H1 (cell line): ENCODE measurements at regions of chr1 and their contacts with region 1.

Region 1: GRCh38 chr1:16398371-16398953 is 31.4 kb downstream of the SZRD1 start:
- DNase-seq: no peak
- H3K4me3 ChIP-seq: no peak overlapping the region
- H3K27ac ChIP-seq: no peak overlapping the region
- H3K4me1 ChIP-seq: peaks cover 0 to 4% (median 0%) of the 10 kb centered on the region in 4 experiments; a peak in 1 of 7 replicates
- H3K27me3 ChIP-seq: no peaks in the 10 kb centered on the region
- CTCF ChIP-seq: no peak
- EP300 ChIP-seq: no peak
- POLR2A ChIP-seq: no peak
- RAD21 ChIP-seq: no peak

Region 2: GRCh38 chr1:16386454-16387113 is 11.9 kb before region 1 on chr1:
- CTCF ChIA-PET with region 1: interaction called, 5 read pairs
- POLR2A ChIA-PET with region 1: interaction called, 13 read pairs
- DNase-seq: no peak
- H3K4me3 ChIP-seq: no peak overlapping the region
- H3K27ac ChIP-seq: no peak overlapping the region
- H3K4me1 ChIP-seq: peaks cover 8 to 22% (median 13%) of the 10 kb centered on the region in 4 experiments
- H3K27me3 ChIP-seq: no peaks in the 10 kb centered on the region
- CTCF ChIP-seq: no peak
- EP300 ChIP-seq: no peak
- POLR2A ChIP-seq: no peak
- RAD21 ChIP-seq: no peak

Region 3: GRCh38 chr1:16451841-16452528 is 53.5 kb after region 1 on chr1:
- CTCF ChIA-PET with region 1: no interaction called
- POLR2A ChIA-PET with region 1: no interaction called
- DNase-seq: no peak
- H3K4me3 ChIP-seq: no peak overlapping the region
- H3K27ac ChIP-seq: no peak overlapping the region
- H3K4me1 ChIP-seq: no peaks in the 10 kb centered on the region
- H3K27me3 ChIP-seq: no peaks in the 10 kb centered on the region
- CTCF ChIP-seq: no peak
- EP300 ChIP-seq: no peak
- POLR2A ChIP-seq: no peak
- RAD21 ChIP-seq: no peak

Region 4: GRCh38 chr1:16474166-16474800 is 75.8 kb after region 1 on chr1:
- CTCF ChIA-PET with region 1: no interaction called
- POLR2A ChIA-PET with region 1: no interaction called
- DNase-seq: no peak
- H3K4me3 ChIP-seq: no peak overlapping the region
- H3K27ac ChIP-seq: no peak overlapping the region
- H3K4me1 ChIP-seq: no peaks in the 10 kb centered on the region
- H3K27me3 ChIP-seq: no peaks in the 10 kb centered on the region
- CTCF ChIP-seq: no peak
- EP300 ChIP-seq: no peak
- POLR2A ChIP-seq: no peak
- RAD21 ChIP-seq: no peak